ENCODE measurements at regions of chr6 and their contacts with region 1.

Region 1: DNA sequence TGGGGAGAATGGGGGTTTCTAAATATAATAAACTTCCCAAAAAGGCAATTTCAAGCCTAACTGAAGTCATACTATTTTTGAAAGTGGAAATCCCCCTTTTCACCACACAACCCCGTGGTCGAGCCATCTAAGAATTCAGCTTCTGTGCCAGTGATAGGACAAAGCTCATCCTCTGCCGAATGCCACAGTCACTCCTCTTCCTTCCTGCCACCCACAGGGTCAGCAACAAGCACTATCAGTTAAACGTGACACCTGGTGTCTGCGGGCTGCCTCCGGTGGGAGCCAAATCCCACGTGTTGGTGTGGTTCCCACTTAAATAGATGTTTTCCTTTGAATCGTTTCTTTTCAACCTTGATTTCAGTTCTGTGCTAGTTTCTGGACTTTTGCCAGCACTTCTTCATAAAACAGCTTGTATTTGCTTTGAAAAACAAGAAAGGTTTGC is 60.7 kb downstream of the TNFAIP3 start:
- DNase-seq: peak; percentile 93
- ATAC-seq: peak; percentile 94
- H3K4me3 Mint-ChIP-seq: peak overlapping the region; percentile 65
- H3K27ac Mint-ChIP-seq: peak overlapping the region; percentile 97
- H3K4me1 Mint-ChIP-seq: peaks cover 78% of the 10 kb centered on the region
- H3K27me3 Mint-ChIP-seq: no peaks in the 10 kb centered on the region
- CTCF ChIP-seq: no peak

Region 2: DNA sequence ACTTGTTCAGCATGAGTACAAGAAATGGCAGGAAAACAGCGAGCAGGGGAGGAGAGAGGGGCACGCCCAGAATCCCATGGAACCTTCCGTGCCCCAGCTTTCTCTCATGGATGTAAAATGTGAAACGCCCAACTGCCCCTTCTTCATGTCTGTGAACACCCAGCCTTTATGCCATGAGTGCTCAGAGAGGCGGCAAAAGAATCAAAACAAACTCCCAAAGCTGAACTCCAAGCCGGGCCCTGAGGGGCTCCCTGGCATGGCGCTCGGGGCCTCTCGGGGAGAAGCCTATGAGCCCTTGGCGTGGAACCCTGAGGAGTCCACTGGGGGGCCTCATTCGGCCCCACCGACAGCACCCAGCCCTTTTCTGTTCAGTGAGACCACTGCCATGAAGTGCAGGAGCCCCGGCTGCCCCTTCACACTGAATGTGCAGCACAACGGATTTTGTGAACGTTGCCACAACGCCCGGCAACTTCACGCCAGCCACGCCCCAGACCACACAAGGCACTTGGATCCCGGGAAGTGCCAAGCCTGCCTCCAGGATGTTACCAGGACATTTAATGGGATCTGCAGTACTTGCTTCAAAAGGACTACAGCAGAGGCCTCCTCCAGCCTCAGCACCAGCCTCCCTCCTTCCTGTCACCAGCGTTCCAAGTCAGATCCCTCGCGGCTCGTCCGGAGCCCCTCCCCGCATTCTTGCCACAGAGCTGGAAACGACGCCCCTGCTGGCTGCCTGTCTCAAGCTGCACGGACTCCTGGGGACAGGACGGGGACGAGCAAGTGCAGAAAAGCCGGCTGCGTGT is 49.1 kb before region 1 on chr6:
- CTCF ChIA-PET with region 1: interaction called, 30 read pairs
- POLR2A ChIA-PET with region 1: interaction called, 13 read pairs
- intact Hi-C with region 1: no loop called
- DNase-seq: no peak
- ATAC-seq: no peak
- H3K4me3 Mint-ChIP-seq: peak overlapping the region; percentile 98
- H3K27ac Mint-ChIP-seq: peak overlapping the region; percentile 95
- H3K4me1 Mint-ChIP-seq: peaks cover 90% of the 10 kb centered on the region
- H3K27me3 Mint-ChIP-seq: no peaks in the 10 kb centered on the region
- CTCF ChIP-seq: no peak

Region 3: GRCh38 chr6:137903933-137904821 is 23.6 kb before region 1 on chr6:
- CTCF ChIA-PET with region 1: interaction called, 11 read pairs
- POLR2A ChIA-PET with region 1: interaction called, 7 read pairs
- intact Hi-C with region 1: loop called (anchors 2 kb)
- DNase-seq: peak; percentile 78
- ATAC-seq: peak; percentile 67
- H3K4me3 Mint-ChIP-seq: peak overlapping the region; percentile 67
- H3K27ac Mint-ChIP-seq: peak overlapping the region; percentile 99
- H3K4me1 Mint-ChIP-seq: peaks cover 57% of the 10 kb centered on the region
- H3K27me3 Mint-ChIP-seq: no peaks in the 10 kb centered on the region
- CTCF ChIP-seq: no peak

Region 4: DNA sequence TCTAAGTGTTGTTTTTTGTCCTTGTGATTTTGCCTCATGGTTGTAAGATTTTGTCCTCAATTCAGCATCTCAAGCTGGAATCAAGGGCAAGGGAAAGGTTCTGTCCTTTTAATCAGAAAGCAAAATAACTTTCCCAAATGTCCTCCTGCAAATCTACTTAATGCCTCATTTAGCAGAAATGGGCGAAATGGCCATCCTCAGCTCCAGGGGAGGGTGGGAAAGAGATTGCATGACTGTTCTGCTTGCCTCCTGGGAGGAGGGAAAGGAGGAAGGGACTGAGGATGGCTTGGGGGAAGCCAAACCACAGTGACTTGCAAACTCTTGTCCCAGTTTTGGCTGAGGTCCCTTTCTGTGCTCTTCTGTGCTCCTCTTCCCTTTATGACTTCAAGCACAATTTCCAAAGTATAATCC is 17.4 kb before region 1 on chr6:
- CTCF ChIA-PET with region 1: interaction called, 11 read pairs
- POLR2A ChIA-PET with region 1: interaction called, 8 read pairs
- intact Hi-C with region 1: loop called (anchors 2 kb)
- DNase-seq: no peak
- ATAC-seq: no peak
- H3K4me3 Mint-ChIP-seq: no peak overlapping the region
- H3K27ac Mint-ChIP-seq: peak overlapping the region; percentile 60
- H3K4me1 Mint-ChIP-seq: peaks cover 55% of the 10 kb centered on the region
- H3K27me3 Mint-ChIP-seq: no peaks in the 10 kb centered on the region
- CTCF ChIP-seq: no peak

Region 5: GRCh38 chr6:137938770-137939379 is 11.1 kb after region 1 on chr6:
- CTCF ChIA-PET with region 1: interaction called, 31 read pairs
- POLR2A ChIA-PET with region 1: interaction called, 12 read pairs
- intact Hi-C with region 1: no loop called
- DNase-seq: no peak
- ATAC-seq: no peak
- H3K4me3 Mint-ChIP-seq: peak overlapping the region; percentile 39
- H3K27ac Mint-ChIP-seq: peak overlapping the region; percentile 92
- H3K4me1 Mint-ChIP-seq: peaks cover 44% of the 10 kb centered on the region
- H3K27me3 Mint-ChIP-seq: no peaks in the 10 kb centered on the region
- CTCF ChIP-seq: no peak

Region 6: DNA sequence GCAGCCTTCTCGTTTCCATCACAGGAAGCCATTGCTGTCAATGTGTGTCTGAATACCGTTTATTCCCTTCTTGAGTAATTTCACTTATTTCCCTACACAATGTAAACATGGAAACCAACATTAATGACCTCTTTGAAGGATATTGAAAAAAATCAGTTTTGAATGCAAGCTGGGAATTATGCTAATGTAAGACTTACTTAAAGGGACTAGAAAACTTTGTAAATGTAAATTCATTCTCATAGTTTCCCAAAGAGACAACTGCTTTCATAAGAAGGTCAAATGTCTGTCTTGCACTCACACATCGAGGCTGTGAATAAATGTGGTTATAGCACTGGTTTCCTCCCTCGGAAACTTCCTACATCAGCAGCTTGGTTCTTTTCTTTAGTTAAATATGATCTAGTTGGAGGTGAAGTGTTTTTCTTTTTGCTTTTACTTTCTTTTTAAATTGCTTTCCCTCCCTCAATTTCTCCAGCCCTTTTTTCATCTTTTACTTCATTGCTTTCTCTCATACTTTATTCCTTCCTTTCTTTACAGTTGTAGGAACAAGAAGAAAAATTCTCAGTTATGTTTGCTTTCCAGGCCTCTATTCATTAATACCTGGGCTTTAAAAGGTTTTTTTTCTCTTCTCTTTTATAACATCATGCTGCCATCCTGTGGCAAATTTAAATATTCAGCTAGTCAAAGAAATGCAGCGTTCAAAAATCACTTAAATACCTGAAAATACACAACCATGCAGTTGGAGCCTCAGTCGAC is 47.6 kb after region 1 on chr6:
- CTCF ChIA-PET with region 1: interaction called, 11 read pairs
- POLR2A ChIA-PET with region 1: no interaction called
- intact Hi-C with region 1: no loop called
- DNase-seq: peak; percentile 64
- ATAC-seq: peak; percentile 69
- H3K4me3 Mint-ChIP-seq: peak overlapping the region; percentile 70
- H3K27ac Mint-ChIP-seq: peak overlapping the region; percentile 94
- H3K4me1 Mint-ChIP-seq: peaks cover 70% of the 10 kb centered on the region
- H3K27me3 Mint-ChIP-seq: no peaks in the 10 kb centered on the region
- CTCF ChIP-seq: peak; percentile 82